HepG2 (cell line): ENCODE measurements at regions of chr9 and their contacts with region 1.

Region 1: DNA sequence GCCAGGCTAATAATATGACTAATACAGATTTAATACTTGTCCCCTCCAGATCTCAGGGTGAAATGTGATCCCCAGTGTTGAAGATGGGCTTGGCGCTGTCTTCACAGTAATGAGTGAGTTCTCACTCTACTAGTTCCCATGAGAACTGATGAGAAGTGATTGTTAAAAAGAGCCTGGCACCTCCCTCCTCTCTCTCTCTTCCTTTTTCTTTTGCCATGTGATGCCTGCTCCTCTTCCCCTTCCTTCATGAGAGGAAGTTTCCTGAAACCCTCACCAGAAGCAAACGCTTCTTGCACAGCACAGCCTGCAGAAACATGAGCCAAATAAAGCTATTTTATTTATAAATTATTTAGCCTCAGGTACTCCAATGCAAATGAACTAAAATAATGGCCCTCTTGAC is 55.2 kb downstream of the GLDC start:
- DNase-seq: no peak
- ATAC-seq: no peak; the same call in 2 of the 3 replicates
- H3K4me3 ChIP-seq: no peak overlapping the region; a peak in 1 of 6 replicates
- H3K27ac ChIP-seq: peak overlapping the region; percentile 83
- H3K4me1 ChIP-seq: peaks cover 41% of the 10 kb centered on the region
- H3K27me3 ChIP-seq: no peaks in the 10 kb centered on the region
- CTCF ChIP-seq: no peak
- EP300 ChIP-seq: no peak
- POLR2A ChIP-seq: no peak
- RAD21 ChIP-seq: no peak

Region 2: GRCh38 chr9:5062631-5063030 is 1527.7 kb before region 1 on chr9:
- CTCF ChIA-PET with region 1: no interaction called
- POLR2A ChIA-PET with region 1: no interaction called
- in situ Hi-C with region 1: no loop called
- intact Hi-C with region 1: no loop called
- DNase-seq: no peak
- ATAC-seq: no peak
- H3K4me3 ChIP-seq: no peak overlapping the region
- H3K27ac ChIP-seq: no peak overlapping the region
- H3K4me1 ChIP-seq: no peaks in the 10 kb centered on the region
- H3K27me3 ChIP-seq: no peaks in the 10 kb centered on the region
- CTCF ChIP-seq: no peak
- EP300 ChIP-seq: no peak
- POLR2A ChIP-seq: no peak
- RAD21 ChIP-seq: no peak

Region 3: DNA sequence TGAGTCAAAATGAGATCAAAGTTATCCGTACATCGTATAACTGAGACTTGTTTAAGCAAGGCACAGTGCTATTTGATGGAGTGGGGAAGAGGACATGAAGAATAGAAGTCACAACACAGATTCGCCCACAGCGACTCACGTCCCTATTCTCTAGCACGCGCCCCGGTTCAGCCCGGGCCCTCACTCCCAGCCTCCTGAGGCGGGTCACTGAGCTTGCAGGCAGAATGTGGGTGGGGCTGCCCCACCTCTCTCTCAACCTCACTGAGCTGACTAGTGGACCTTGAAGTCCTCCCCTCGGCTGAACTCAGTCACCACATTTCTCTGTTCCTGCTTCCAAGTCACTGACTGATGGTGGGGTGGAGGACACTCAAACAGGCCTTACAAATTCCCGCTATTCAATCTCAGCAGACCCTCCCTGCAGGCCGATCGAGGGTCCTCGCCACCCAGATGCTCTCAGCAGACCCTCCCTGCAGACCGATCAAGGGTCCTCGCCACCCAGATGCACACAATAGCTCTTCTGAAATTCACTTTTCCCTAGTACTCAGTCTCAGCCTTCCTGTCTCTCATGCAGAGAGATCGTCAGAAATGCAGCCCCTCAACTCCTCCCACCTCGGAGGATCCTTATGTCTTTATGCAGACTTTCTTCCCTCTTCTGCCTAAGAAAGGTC is 42.3 kb after region 1 on chr9:
- CTCF ChIA-PET with region 1: no interaction called
- POLR2A ChIA-PET with region 1: interaction called, 7 read pairs
- in situ Hi-C with region 1: no loop called
- intact Hi-C with region 1: loop called (anchors 5 kb)
- DNase-seq: peak; percentile 74
- ATAC-seq: peak; percentile 97
- H3K4me3 ChIP-seq: peak overlapping the region in 1 of 3 experiments; percentile 35; a peak in 3 of 6 replicates
- H3K27ac ChIP-seq: peak overlapping the region; percentile 49
- H3K4me1 ChIP-seq: peaks cover 67% of the 10 kb centered on the region
- H3K27me3 ChIP-seq: no peaks in the 10 kb centered on the region
- CTCF ChIP-seq: 0 out of 2 replicates have a peak, but pooled peaks have one; percentile 7
- EP300 ChIP-seq: peak in 1 of 2 experiments; percentile 14; a peak in 1 of 4 replicates
- POLR2A ChIP-seq: peak in 1 of 2 experiments; percentile 31; a peak in 1 of 4 replicates
- RAD21 ChIP-seq: 0 out of 2 replicates have a peak, but pooled peaks have one; percentile 14

Region 4: DNA sequence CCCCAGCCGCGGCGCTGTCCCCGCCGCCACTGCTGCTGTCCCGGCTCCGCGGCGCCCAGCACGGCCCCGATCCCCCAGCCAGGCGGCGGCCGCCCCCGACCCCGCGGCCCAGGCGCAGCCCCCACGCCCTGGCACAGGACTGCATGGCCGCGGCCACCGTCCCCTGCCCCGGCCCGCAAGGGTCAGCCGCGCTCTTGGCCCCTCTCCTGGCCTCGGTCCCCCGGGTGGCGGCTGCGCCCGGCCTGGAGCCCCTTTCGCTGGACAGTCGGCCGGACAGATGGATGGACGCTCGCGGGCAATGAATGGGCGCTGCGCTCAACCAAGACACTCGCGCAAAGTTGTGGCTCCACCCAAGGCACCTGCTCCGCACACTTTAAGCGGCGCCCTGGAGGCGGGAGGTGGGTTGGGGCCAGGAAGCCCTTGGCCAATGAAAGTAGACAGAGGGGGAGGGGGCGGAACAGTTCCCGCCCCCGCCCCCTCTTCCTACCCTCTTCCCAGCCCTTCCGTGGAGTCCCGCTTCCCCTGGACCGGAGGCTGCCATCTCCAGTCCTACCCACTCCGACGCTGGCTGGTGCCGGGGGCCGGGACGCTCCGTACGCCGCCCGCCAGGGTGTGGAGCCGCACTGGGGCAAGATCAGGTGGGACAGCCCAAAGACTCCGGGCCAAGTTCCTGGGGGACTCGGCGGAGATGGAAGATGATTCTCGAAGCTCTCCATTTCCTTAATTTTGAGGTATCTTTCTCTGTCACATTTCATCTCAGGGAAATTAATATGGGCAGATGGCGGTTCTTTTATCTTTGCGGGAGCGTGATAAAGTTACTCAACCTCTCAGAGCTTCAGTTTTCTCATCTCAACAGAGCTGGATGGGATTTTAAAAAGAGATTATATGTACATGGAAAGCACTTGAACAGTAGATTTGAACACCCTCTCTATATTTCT is 55.3 kb after region 1 on chr9 and contains the start of gene GLDC:
- CTCF ChIA-PET with region 1: no interaction called
- POLR2A ChIA-PET with region 1: interaction called, 14 read pairs
- in situ Hi-C with region 1: no loop called
- intact Hi-C with region 1: loop called (anchors 1 kb)
- DNase-seq: peak; percentile 90
- ATAC-seq: peak; percentile 95
- H3K4me3 ChIP-seq: peak within 1 kb of the TSS; percentile 76 to 96 (median 81)
- H3K27ac ChIP-seq: peak within 1 kb of the TSS; percentile 72
- H3K4me1 ChIP-seq: peaks cover 61% of the 10 kb centered on the region
- H3K27me3 ChIP-seq: no peaks in the 10 kb centered on the region; a peak in 1 of 5 replicates
- CTCF ChIP-seq: peak; percentile 33
- EP300 ChIP-seq: no peak
- POLR2A ChIP-seq: peak; percentile 80 to 87
- RAD21 ChIP-seq: no peak
- total RNA-seq, gene GLDC: 51.0 and 115 TPM in 2 replicates

Region 5: DNA sequence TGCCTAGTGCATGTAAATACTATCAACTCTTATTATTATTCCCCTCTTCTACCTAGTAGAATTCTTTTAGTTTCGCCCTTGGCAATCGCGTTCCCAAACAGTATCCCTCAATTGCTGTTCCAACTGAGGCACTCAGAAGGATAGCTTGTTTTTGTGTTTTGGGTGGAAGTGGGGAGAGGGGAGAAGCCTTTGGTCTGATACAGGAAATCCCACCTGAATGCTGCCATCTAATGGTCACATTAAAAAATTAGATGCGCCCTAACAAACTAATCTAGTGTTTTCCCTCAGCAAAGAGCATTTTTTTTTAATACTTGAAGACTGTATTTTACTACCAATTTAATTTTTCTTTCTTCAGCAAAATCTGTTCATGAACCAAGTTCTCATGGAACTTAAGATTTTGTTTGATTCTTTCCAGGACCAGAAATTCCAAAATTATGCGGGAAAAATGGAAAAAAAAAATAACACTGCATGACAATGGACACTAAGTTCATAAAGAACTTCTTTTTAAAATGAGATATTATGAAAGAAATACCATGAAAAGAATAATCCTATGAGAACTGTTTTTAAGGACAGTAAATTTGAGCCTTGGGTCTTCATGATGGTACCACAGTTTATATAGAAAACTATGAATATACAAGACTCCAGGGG is 77.4 kb after region 1 on chr9:
- CTCF ChIA-PET with region 1: interaction called, 22 read pairs
- POLR2A ChIA-PET with region 1: interaction called, 31 read pairs
- in situ Hi-C with region 1: no loop called
- intact Hi-C with region 1: loop called (anchors 1 kb)
- DNase-seq: no peak
- ATAC-seq: no peak
- H3K4me3 ChIP-seq: no peak overlapping the region
- H3K27ac ChIP-seq: no peak overlapping the region
- H3K4me1 ChIP-seq: peaks cover 70% of the 10 kb centered on the region
- H3K27me3 ChIP-seq: no peaks in the 10 kb centered on the region
- CTCF ChIP-seq: peak; percentile 69
- EP300 ChIP-seq: no peak
- POLR2A ChIP-seq: no peak
- RAD21 ChIP-seq: peak; percentile 47; the same call in 1 of the 2 replicates

Region 6: GRCh38 chr9:6715755-6716643 is 125.7 kb after region 1 on chr9:
- CTCF ChIA-PET with region 1: no interaction called
- POLR2A ChIA-PET with region 1: interaction called, 15 read pairs
- in situ Hi-C with region 1: no loop called
- intact Hi-C with region 1: no loop called
- DNase-seq: peak; percentile 79
- ATAC-seq: peak; percentile 89
- H3K4me3 ChIP-seq: peak overlapping the region; percentile 57 to 72 (median 65)
- H3K27ac ChIP-seq: peak overlapping the region; percentile 93
- H3K4me1 ChIP-seq: peaks cover 34% of the 10 kb centered on the region
- H3K27me3 ChIP-seq: no peaks in the 10 kb centered on the region
- CTCF ChIP-seq: 0 out of 2 replicates have a peak, but pooled peaks have one; percentile 16
- EP300 ChIP-seq: no peak
- POLR2A ChIP-seq: peak; percentile 85 to 93
- RAD21 ChIP-seq: no peak